KBM-7 (cell line): ENCODE measurements at regions of chrX and their contacts with region 1.

Region 1: GRCh38 chrX:1222531-1223241 is 10.2 kb upstream of the CRLF2 start:
- DNase-seq: peak; percentile 94

Region 2: DNA sequence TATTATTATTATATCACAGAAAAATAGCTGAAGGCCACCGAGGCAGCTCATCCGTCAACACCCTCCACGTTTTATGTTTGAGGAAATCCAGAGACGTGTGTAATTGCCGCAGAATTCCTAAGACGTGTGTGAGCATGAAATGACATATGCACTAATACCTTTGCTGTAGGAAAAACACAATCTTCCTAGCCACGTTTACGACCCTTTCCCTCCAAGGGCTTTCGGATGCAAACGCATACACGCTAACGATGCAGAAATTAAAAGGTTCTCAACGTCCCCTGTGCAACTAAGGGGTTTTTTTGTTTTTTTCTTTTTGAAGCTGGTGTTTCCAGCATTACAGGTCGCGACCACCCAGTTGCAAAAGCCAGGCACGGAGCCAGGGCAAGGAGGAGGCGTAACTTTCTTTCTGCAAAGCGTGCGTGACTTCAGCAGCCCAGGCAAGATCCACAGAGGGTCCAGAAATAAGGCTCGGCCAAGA is 44.1 kb before region 1 on chrX:
- in situ Hi-C with region 1: loop called (anchors 10 kb)
- DNase-seq: peak; percentile 74